Activated T-helper 2 cell treated with anti-CD3 and anti-CD28 coated beads, Interferon-gamma antibody, Interleukin-2, Interleukin-4, amounts not matched to agents 10 μg/mL and 5 μg/mL and 100 μg/mL, durations not matched to agents 14 hours and 24 hours and 36 hours (primary cell): ENCODE measurements at regions of chr14 and their contacts with region 1.

Region 1: DNA sequence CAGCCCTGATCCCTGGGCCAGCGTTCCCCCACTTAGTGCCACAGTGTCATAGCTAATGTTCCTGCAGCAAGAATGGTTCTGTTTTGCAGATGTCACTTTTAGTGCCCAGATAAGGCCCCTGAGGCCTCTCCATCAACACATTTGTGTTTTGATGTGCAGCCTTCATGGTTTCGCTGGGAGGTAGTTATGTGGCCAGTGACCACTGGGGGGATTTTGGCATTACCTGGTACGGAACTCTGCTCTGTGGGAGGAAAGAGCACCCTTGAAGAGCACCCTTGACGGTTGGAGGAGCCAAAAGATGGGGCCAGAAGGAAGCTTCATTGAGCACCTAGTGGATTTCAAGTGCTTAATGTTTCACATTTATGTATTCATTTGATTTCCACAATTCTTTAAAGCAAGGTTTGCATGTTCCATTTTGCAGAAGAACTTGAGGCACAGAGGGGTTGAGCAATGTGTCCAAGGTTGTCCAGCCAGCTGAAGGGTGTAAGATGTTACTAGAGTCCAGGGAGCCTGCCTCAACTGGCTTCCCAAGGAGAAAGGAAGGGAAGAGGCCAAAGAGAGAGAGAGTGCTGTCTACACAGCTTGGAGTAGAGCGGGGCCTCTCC is 13.0 kb downstream of the SERPINA11 start:
- DNase-seq: no peak
- H3K4me3 Mint-ChIP-seq: no peak overlapping the region
- H3K27ac Mint-ChIP-seq: no peak overlapping the region
- H3K4me1 Mint-ChIP-seq: no peaks in the 10 kb centered on the region
- H3K27me3 Mint-ChIP-seq: peaks cover 2% of the 10 kb centered on the region

Region 2: GRCh38 chr14:93788543-93789227 is 650.9 kb before region 1 on chr14:
- intact Hi-C with region 1: no loop called
- DNase-seq: no peak
- H3K4me3 Mint-ChIP-seq: no peak overlapping the region
- H3K27ac Mint-ChIP-seq: no peak overlapping the region
- H3K4me1 Mint-ChIP-seq: no peaks in the 10 kb centered on the region
- H3K27me3 Mint-ChIP-seq: peaks cover 72% of the 10 kb centered on the region

Region 3: DNA sequence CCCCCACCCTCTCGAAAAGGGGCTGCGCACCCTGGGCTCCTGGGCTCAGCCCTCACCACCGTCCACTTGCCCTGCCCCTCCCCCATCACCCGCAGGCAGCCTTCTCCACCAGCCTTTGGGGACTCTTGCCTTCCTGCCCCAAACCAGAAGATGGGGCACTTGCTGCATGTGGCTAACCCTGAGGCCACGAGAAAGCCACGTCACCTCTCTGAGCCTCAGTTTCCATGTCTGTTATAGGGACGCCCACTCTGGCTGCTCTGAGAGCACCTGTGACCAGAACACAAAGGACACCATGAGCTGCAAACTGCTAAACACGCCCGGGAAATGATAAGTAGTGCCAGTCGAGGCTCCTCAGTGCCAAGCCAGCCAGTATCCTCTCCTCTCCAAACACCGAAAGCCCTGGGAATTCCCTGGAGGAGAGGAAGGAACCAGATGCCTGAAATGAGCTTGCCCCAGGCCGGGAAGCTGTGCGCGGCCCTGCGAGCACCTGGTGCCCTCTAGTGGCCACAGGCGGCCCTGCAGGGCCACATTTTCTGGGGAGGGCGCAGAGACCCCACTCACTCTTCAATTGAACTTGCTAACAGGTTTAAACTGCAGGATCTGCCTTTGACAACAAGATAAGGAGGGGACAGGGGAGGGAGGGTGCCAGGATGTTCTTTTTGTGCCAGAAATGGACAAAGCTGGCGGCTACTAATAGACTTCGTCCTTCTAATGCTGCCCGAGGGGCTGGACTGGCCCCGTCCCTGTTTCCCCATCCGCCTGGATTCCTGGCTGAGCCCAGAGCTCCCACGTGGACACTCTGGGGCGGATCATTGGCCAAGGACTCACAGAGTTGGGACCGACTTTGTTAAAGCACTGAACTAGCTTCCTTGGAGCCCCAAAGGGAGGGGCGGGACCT is 46.6 kb after region 1 on chr14:
- intact Hi-C with region 1: loop called (anchors 5 kb)
- DNase-seq: peak; percentile 17
- H3K4me3 Mint-ChIP-seq: no peak overlapping the region
- H3K27ac Mint-ChIP-seq: no peak overlapping the region
- H3K4me1 Mint-ChIP-seq: no peaks in the 10 kb centered on the region
- H3K27me3 Mint-ChIP-seq: no peaks in the 10 kb centered on the region

Region 4: GRCh38 chr14:94548999-94549985 is 109.7 kb after region 1 on chr14:
- intact Hi-C with region 1: loop called (anchors 2 kb)
- DNase-seq: peak; percentile 24
- H3K4me3 Mint-ChIP-seq: no peak overlapping the region
- H3K27ac Mint-ChIP-seq: no peak overlapping the region
- H3K4me1 Mint-ChIP-seq: no peaks in the 10 kb centered on the region
- H3K27me3 Mint-ChIP-seq: peaks cover 8% of the 10 kb centered on the region

Region 5: DNA sequence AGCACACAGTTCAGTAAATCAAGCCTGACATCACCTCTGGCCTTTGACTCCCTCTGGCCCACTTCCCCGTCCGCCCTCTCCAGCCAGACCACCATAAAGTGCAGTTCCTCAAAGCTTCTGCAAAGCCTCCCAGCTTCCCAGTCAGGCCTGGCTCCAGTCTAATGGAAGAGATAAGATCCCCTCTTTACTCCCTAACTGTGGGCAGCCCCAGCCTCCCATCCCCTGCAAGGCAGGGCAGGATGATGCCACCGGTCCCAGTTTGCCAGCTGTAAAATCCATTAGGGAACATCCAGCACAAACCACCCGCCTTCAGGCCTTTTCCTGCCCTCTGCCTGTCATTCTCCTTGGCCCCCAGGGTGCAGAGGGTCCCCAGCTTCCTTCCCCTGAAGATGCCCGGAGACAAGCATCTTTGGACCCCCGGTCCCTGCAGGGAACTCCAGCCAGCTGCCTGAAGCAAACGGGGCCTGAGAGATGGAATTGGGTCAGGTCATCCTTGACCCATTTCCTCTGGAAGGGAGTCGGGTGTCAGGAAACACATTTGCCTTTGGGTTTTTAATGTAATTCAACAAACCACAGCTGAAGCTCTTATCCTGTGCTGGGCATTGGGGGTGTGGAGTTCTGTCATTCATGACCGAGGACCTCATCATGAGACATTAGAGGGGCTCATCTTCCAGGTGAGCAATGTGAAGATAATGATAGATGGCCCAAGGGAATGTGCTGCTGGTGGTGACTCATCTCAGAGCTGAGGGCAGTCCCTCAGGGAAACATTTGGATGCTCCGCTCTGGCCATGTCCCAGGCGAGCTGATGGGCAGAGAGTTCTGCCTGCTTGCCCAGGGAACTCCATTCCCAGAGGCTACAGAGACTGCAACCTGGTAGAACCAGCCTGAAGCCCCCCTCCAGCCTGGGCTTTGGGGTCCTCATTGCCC is 974.0 kb after region 1 on chr14:
- intact Hi-C with region 1: no loop called
- DNase-seq: no peak
- H3K4me3 Mint-ChIP-seq: no peak overlapping the region
- H3K27ac Mint-ChIP-seq: no peak overlapping the region
- H3K4me1 Mint-ChIP-seq: no peaks in the 10 kb centered on the region
- H3K27me3 Mint-ChIP-seq: no peaks in the 10 kb centered on the region